Panc1 (cell line): ENCODE measurements at regions of chr1 and their contacts with region 1.

Region 1: DNA sequence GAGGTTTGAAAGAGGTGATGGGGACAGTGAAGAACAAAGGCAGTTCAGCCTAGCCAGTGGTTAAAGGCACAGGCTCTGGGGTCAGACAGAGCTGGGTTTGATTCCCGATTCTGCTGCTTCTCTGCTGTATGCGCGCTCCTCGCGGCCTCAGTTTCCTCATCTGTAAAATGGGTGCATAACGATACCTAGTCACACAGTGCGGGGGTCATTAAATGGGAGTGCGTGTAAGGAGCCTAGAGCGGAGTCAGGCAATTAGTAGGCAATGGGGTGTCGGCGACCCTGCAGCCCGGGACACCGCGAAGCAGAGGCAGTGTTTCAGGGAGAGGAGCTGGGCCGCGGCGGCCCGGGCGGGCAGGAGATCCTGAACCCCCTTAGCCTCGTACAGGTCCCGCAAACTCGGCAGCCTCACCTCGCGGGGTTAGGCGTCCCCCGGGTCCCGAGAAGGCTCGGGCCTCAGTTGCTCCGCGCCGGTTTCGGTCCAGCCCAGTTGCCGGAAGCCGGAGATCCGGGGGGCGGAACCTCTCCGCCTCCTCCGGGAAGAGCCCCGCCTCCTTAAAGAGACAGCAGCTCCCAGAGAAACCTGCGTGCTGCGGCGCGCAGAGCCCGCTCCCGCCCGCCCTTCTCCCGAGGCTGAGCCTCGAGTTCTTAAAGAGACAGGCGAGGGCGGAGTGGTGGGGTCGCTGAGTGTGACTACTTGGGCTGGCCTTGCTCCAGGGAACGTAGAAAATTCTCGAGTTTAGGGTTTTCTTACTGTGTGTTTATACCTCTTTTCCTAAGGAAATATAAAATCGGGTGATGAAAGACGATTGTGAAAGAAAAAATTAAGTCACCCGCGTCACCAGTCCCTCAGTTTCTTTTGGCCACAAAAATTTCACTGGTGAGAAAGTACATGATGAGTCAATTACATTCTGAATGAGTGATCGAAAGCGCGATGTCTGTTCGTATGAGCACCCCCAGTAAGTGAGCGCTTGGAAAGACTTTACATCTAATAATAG is at the start of gene YIPF1:
- DNase-seq: peak; percentile 43
- ATAC-seq: peak; percentile 100
- H3K4me3 ChIP-seq: peak within 1 kb of the TSS; percentile 81 to 98
- H3K27ac ChIP-seq: peak within 1 kb of the TSS; percentile 89
- H3K4me1 ChIP-seq: peaks cover 12% of the 10 kb centered on the region
- H3K27me3 ChIP-seq: no peaks in the 10 kb centered on the region
- CTCF ChIP-seq: no peak
- total RNA-seq, gene YIPF1: 21.4 TPM

Region 2: GRCh38 chr1:53850082-53850673 is 39.4 kb before region 1 on chr1:
- CTCF ChIA-PET with region 1: interaction called, 11 read pairs
- POLR2A ChIA-PET with region 1: no interaction called
- in situ Hi-C with region 1: no loop called
- intact Hi-C with region 1: no loop called
- DNase-seq: no peak
- ATAC-seq: no peak
- H3K4me3 ChIP-seq: no peak overlapping the region
- H3K27ac ChIP-seq: no peak overlapping the region
- H3K4me1 ChIP-seq: no peaks in the 10 kb centered on the region
- H3K27me3 ChIP-seq: peaks cover 2% of the 10 kb centered on the region; the same call in 1 of the 2 replicates
- CTCF ChIP-seq: no peak

Region 3: GRCh38 chr1:54037476-54037875 is 147.9 kb after region 1 on chr1:
- CTCF ChIA-PET with region 1: no interaction called
- POLR2A ChIA-PET with region 1: no interaction called
- in situ Hi-C with region 1: no loop called
- intact Hi-C with region 1: no loop called
- DNase-seq: no peak
- ATAC-seq: no peak
- H3K4me3 ChIP-seq: no peak overlapping the region
- H3K27ac ChIP-seq: no peak overlapping the region
- H3K4me1 ChIP-seq: no peaks in the 10 kb centered on the region
- H3K27me3 ChIP-seq: no peaks in the 10 kb centered on the region
- CTCF ChIP-seq: no peak